Psoas muscle (tissue), 8 donors: ENCODE measurements at regions of chr6 and their contacts with region 1.

Region 1: DNA sequence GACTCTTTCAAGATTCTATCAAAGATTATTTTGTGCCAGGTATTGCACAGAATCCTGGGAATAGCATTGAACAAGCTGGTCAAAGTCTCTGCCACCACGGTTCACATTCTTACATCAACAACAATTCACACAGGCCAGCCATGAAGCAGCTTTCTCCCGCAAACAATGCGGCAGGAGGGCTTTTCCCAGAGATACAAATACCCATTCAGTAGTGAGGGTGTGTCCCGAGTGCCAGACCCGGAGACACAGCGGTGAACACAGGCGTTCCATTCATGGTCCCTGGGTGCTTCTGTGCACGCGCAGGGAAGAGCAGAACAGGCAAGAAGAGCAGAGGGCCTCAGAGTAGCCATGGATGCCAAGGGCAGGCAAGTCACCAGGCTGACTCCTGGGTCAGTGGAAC is 83.3 kb upstream of the PDE10A start:
- DNase-seq: no peak
- ATAC-seq: no peak
- H3K4me3 ChIP-seq: no peak overlapping the region
- H3K27ac ChIP-seq: no peak overlapping the region
- H3K4me1 ChIP-seq: no peaks in the 10 kb centered on the region
- H3K27me3 ChIP-seq: no peaks in the 10 kb centered on the region
- CTCF ChIP-seq: no peak

Region 2: DNA sequence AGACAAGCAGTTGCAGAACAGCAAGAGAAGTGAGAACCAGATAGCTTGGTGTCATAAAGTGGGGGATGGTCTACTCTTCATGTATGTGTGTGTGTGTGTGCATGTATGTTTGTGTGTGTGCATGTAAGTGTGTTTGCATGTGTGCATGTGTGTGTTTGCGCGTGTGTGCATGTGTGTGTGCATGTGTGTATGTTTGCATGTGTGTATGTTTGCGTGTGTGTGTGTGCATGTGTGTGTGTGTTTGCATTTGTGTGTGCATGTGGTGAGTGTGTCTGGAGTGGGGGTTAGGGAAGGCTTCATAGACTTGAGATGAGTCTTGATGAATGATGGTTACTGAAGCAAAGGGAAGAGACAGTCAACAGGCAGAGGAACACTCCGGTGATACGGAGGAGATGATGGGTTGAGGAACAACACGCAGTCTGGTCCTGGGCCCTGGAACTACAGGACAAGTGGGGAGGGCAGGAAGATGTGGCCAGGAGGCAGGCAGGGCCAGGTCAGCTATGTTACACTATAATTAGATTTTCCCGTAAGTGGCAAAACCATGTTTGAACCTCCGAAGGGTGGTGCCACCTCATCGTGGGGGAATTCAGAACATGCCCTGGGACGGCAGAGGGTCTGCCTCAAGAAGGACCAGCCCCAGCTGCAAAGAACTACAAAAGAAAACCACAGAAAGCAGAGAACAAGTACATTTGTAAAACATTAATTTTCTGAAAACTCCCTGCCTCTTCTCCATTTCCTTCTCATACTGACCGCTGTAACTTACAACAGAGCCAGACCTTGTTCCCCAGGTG is 44.6 kb before region 1 on chr6:
- intact Hi-C with region 1: loop called in 1 of 2 experiments (anchors 2 kb)
- DNase-seq: no peak
- ATAC-seq: no peak
- H3K4me3 ChIP-seq: no peak overlapping the region
- H3K27ac ChIP-seq: no peak overlapping the region
- H3K4me1 ChIP-seq: no peaks in the 10 kb centered on the region
- H3K27me3 ChIP-seq: no peaks in the 10 kb centered on the region
- CTCF ChIP-seq: no peak

Region 3: GRCh38 chr6:166127624-166128472 is 381.5 kb after region 1 on chr6:
- intact Hi-C with region 1: no loop called
- DNase-seq: no peak
- ATAC-seq: no peak
- H3K4me3 ChIP-seq: no peak overlapping the region
- H3K27ac ChIP-seq: no peak overlapping the region
- H3K4me1 ChIP-seq: no peaks in the 10 kb centered on the region
- H3K27me3 ChIP-seq: no peaks in the 10 kb centered on the region
- CTCF ChIP-seq: no peak